Testis (tissue), 5 donors: ENCODE measurements at regions of chr19 and their contacts with region 1.

Region 1: DNA sequence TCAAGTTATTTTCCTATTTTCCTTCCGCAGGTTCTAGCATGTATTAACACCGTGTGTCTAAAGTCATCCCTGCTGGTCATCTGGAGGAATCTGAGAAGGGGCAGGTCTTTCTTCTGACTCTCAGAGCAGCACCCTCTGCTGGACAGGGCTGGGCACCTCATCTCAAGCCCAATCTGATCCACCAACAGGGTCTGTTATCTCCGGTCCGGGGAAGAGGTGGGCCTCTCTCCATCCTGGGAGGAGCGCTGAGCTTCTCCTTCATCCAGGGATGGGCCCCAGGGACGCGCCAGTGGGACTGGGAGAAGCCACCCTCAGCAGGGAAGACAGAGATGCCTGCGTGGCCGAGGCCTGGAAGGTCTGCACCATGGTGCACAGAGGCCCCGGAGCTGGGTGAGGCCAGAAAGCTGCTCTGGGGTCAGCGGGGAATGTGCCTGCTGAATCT is 26.0 kb upstream of the ZNF331 start:
- DNase-seq: peak; percentile 75
- H3K4me3 ChIP-seq: no peak overlapping the region
- H3K27ac ChIP-seq: no peak overlapping the region
- H3K4me1 ChIP-seq: no peaks in the 10 kb centered on the region
- H3K27me3 ChIP-seq: no peaks in the 10 kb centered on the region
- CTCF ChIP-seq: peak; percentile 39 to 60 (median 54)
- POLR2A ChIP-seq: no peak

Region 2: GRCh38 chr19:53424968-53425597 is 86.9 kb before region 1 on chr19:
- intact Hi-C with region 1: loop called (anchors 10 kb)
- DNase-seq: peak; percentile 88
- H3K4me3 ChIP-seq: no peak overlapping the region
- H3K27ac ChIP-seq: no peak overlapping the region
- H3K4me1 ChIP-seq: peaks cover 3% of the 10 kb centered on the region
- H3K27me3 ChIP-seq: no peaks in the 10 kb centered on the region
- CTCF ChIP-seq: peak; percentile 21 to 78 (median 67)
- POLR2A ChIP-seq: no peak